ENCODE measurements at regions of chr20 and their contacts with region 1.

Region 1: DNA sequence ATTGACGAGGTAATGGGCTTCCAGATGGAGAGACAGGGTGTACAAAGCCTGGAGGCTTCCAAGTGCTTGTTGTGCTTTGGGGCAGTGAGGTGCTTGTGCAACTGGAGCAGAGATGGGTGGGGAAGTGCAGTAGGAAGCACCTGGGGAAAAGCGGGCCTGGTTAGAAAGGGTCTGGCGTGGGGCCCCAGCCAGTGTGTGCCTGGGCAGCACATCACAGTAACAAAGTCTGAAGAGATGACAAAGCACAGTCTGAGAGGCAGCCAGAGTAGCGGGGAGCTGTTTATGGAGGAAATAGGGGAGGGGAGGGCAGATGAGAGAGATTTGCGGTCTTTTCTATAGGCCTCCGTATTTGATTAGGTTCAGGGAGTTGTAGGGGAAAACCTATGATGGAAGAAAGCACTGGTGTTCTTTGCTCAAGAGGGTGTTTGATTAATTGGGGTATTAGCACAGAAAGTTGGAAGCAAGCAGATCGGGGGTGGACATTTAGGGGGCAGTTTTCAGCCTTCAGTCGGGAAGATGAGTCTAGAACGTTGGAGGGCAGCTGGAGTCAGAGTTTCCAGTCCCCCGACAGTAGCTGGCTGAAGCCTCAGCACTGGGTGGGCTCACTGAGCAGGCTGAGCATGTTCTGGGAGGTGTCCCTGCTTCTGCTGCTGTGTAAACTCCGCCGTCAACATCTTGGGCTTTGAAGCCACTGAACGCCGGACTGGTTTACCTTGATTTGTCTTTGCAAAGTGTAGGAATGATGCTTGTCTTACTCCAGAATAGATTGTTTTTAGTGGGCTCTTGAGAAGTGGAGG is 15.5 kb upstream of the MROH8 start:
- DNase-seq: no peak

Region 2: GRCh38 chr20:37265152-37265551 is 70.3 kb after region 1 on chr20:
- intact Hi-C with region 1: loop called (anchors 5 kb)
- DNase-seq: no peak

Region 3: GRCh38 chr20:37384683-37385174 is 189.9 kb after region 1 on chr20:
- intact Hi-C with region 1: loop called (anchors 2 kb)
- DNase-seq: peak; percentile 32 to 95 (median 62)

Region 4: GRCh38 chr20:37534401-37535157 is 339.8 kb after region 1 on chr20:
- intact Hi-C with region 1: loop called (anchors 1 kb)
- DNase-seq: peak in 2 of 10 donors; percentile 38 to 43